ENCODE measurements at regions of chr12 and their contacts with region 1.

Region 1: GRCh38 chr12:21764065-21764464 is 10.4 kb downstream of the KCNJ8 start:
- DNase-seq: peak in 1 of 2 experiments; percentile 38
- H3K4me3 ChIP-seq: no peak overlapping the region
- H3K4me3 Mint-ChIP-seq: no peak overlapping the region
- H3K27ac Mint-ChIP-seq: peak overlapping the region; percentile 47
- H3K4me1 ChIP-seq: peaks cover 28% of the 10 kb centered on the region
- H3K4me1 Mint-ChIP-seq: peaks cover 40% of the 10 kb centered on the region
- H3K27me3 ChIP-seq: no peaks in the 10 kb centered on the region
- H3K27me3 Mint-ChIP-seq: no peaks in the 10 kb centered on the region
- CTCF ChIP-seq: no peak

Region 2: DNA sequence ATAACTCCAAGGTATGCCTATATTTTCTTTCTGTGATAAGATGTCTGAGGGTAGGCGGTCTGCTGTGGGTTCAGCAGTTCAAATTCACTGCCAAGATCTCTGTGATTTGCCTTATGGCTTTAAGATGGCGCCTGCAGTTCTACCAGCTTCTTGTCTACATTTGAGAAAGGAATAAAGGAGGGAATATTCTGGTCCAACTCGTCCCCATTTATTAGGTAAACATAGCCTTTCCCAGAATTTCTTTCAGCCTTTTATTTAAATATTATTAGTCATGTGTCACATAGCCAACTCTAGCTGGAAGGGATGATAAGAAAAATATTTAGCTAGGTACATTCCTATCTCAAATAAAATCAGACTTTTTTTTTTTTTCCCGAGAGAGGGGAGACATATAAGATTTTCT is 38.3 kb before region 1 on chr12:
- CTCF ChIA-PET with region 1: no interaction called
- POLR2A ChIA-PET with region 1: no interaction called
- intact Hi-C with region 1: no loop called
- DNase-seq: no peak
- H3K4me3 ChIP-seq: no peak overlapping the region
- H3K4me3 Mint-ChIP-seq: no peak overlapping the region
- H3K27ac Mint-ChIP-seq: no peak overlapping the region
- H3K4me1 ChIP-seq: 0 out of 2 replicates have a peak, but pooled peaks cover 7% of the 10 kb centered on the region
- H3K4me1 Mint-ChIP-seq: no peaks in the 10 kb centered on the region
- H3K27me3 ChIP-seq: no peaks in the 10 kb centered on the region
- H3K27me3 Mint-ChIP-seq: no peaks in the 10 kb centered on the region
- CTCF ChIP-seq: no peak

Region 3: GRCh38 chr12:21800011-21800410 is 35.9 kb after region 1 on chr12:
- CTCF ChIA-PET with region 1: no interaction called
- POLR2A ChIA-PET with region 1: interaction called, 12 read pairs
- intact Hi-C with region 1: no loop called
- DNase-seq: peak in 1 of 2 experiments; percentile 47
- H3K4me3 ChIP-seq: no peak overlapping the region
- H3K4me3 Mint-ChIP-seq: no peak overlapping the region
- H3K27ac Mint-ChIP-seq: peak overlapping the region; percentile 29
- H3K4me1 ChIP-seq: peaks cover 34% of the 10 kb centered on the region
- H3K4me1 Mint-ChIP-seq: peaks cover 7% of the 10 kb centered on the region
- H3K27me3 ChIP-seq: no peaks in the 10 kb centered on the region
- H3K27me3 Mint-ChIP-seq: no peaks in the 10 kb centered on the region
- CTCF ChIP-seq: no peak

Measured in Caco-2 (cell line).